PC-3 (cell line): ENCODE measurements at regions of chr2 and their contacts with region 1.

Region 1: GRCh38 chr2:189466660-189467059 is 25.4 kb downstream of the WDR75 start:
- DNase-seq: peak; percentile 51
- ATAC-seq: 0 out of 2 replicates have a peak, but pooled peaks have one; percentile 40
- H3K4me3 ChIP-seq: no peak overlapping the region
- H3K27ac ChIP-seq: no peak overlapping the region
- H3K4me1 ChIP-seq: no peaks in the 10 kb centered on the region
- H3K27me3 ChIP-seq: no peaks in the 10 kb centered on the region
- CTCF ChIP-seq: peak; percentile 81

Region 2: DNA sequence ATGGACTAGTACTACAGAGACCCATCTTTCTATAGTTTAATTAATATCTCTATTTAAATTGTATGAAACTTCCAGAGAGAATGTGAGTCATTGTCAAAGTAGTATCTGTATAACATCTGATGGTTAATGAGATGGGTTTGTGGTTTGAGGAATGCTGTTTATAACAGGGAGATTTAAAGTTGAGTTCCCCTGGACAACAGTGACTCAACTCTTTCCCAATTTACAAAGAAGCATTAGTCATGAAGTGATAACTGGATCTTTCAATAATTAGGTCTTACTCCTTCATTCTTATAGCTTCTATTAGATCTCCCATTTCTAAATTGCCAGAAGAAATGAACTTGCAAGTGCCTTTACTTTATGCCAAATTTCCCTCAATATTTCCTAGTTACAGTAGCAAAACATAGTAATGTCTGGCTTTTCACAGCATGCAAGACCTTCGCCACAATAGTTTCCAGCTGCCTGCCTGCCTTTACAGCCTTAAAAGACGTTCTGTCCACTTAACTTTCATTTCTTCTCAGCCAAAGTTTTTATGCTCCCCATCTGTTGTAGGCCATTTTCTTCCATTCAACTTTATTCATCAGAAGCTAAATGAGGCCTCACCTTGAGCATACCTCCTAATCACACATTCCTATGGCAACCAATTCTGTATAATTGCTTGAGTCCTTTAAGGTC is 73.1 kb before region 1 on chr2:
- CTCF ChIA-PET with region 1: no interaction called
- POLR2A ChIA-PET with region 1: interaction called, 11 read pairs
- intact Hi-C with region 1: no loop called
- DNase-seq: peak; percentile 94
- ATAC-seq: peak; percentile 97
- H3K4me3 ChIP-seq: peak overlapping the region; percentile 43; the same call in 1 of the 2 replicates
- H3K27ac ChIP-seq: peak overlapping the region; percentile 73
- H3K4me1 ChIP-seq: peaks cover 22% of the 10 kb centered on the region
- H3K27me3 ChIP-seq: no peaks in the 10 kb centered on the region
- CTCF ChIP-seq: no peak

Region 3: GRCh38 chr2:189559579-189560272 is 93.1 kb after region 1 on chr2:
- CTCF ChIA-PET with region 1: no interaction called
- POLR2A ChIA-PET with region 1: no interaction called
- intact Hi-C with region 1: loop called (anchors 2 kb)
- DNase-seq: no peak
- ATAC-seq: peak; percentile 48; the same call in 1 of the 2 replicates
- H3K4me3 ChIP-seq: no peak overlapping the region
- H3K27ac ChIP-seq: no peak overlapping the region
- H3K4me1 ChIP-seq: peaks cover 25% of the 10 kb centered on the region
- H3K27me3 ChIP-seq: no peaks in the 10 kb centered on the region
- CTCF ChIP-seq: no peak

Region 4: GRCh38 chr2:189633392-189633811 is 166.7 kb after region 1 on chr2:
- CTCF ChIA-PET with region 1: interaction called, 3 read pairs
- POLR2A ChIA-PET with region 1: no interaction called
- intact Hi-C with region 1: loop called (anchors 1 kb)
- DNase-seq: peak; percentile 49
- ATAC-seq: peak; percentile 50
- H3K4me3 ChIP-seq: no peak overlapping the region
- H3K27ac ChIP-seq: no peak overlapping the region
- H3K4me1 ChIP-seq: no peaks in the 10 kb centered on the region
- H3K27me3 ChIP-seq: no peaks in the 10 kb centered on the region
- CTCF ChIP-seq: peak; percentile 74